ENCODE measurements at regions of chr15 and their contacts with region 1.

Region 1: GRCh38 chr15:79989682-79990081 is 18.7 kb upstream of the BCL2A1 start:
- DNase-seq: no peak
- H3K4me3 ChIP-seq: no peak overlapping the region
- H3K27ac ChIP-seq: no peak overlapping the region
- H3K4me1 ChIP-seq: no peaks in the 10 kb centered on the region
- H3K27me3 ChIP-seq: peaks cover under 1 to 3% of the 10 kb centered on the region in 2 experiments
- CTCF ChIP-seq: no peak
- POLR2A ChIP-seq: no peak

Region 2: GRCh38 chr15:79769069-79769481 is 220.6 kb before region 1 on chr15:
- CTCF ChIA-PET with region 1: no interaction called
- POLR2A ChIA-PET with region 1: no interaction called
- dilution Hi-C with region 1: no loop called
- intact Hi-C with region 1: loop called (anchors 1 kb)
- DNase-seq: no peak
- H3K4me3 ChIP-seq: no peak overlapping the region
- H3K27ac ChIP-seq: no peak overlapping the region
- H3K4me1 ChIP-seq: no peaks in the 10 kb centered on the region
- H3K27me3 ChIP-seq: no peaks in the 10 kb centered on the region
- CTCF ChIP-seq: peak in 1 of 2 donors; percentile 3
- POLR2A ChIP-seq: no peak

Region 3: DNA sequence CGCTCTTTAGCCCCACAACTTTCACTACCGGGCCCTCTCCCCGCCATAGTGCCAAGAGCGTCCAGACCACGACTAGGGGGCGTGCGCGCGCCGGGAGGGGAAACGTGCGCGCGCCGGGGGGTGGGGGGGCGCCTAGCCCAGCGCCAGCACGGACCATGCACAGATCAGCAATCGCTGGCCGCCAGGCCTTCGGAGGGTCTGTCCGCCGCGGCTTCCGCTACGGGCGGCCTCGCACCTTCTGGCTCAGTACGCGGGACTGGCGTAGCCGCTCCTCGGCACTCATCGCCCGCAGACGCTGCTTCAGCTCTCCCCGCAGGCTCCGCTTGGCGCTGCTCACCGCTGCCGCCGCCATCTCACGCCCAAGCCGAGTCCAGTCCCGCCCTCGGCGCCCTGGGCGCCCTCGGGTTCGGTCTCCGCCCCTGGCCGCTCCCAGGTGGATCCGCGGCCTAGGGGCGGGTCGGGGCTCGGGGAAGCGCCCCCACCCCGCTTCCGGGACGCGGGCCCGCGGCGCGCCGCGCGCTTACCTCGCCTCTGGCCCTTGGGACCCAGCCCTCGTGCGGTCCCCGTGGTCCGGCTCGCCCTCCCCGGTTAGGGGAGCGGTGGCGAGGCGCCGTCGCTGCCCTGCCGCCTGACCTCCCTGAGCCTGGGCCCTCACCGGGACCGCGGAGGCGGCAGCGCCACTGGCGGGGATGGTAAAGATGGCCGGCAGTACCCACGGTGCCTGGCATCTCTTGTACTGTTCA is 92.9 kb before region 1 on chr15 and contains the start of gene MTHFS:
- CTCF ChIA-PET with region 1: interaction called, 3 read pairs
- POLR2A ChIA-PET with region 1: no interaction called
- dilution Hi-C with region 1: no loop called
- intact Hi-C with region 1: loop called (anchors 1 kb)
- DNase-seq: peak; percentile 73
- H3K4me3 ChIP-seq: peak within 1 kb of the TSS in 2 of 3 experiments; percentile 53 to 77
- H3K27ac ChIP-seq: peak within 1 kb of the TSS; percentile 46
- H3K4me1 ChIP-seq: peaks cover 8% of the 10 kb centered on the region
- H3K27me3 ChIP-seq: no peaks in the 10 kb centered on the region
- CTCF ChIP-seq: peak; percentile 42 to 65
- POLR2A ChIP-seq: peak; percentile 66
- total RNA-seq, gene MTHFS: 9.9 and 15.7 TPM in 2 replicates

Region 4: GRCh38 chr15:80058851-80059785 is 69.4 kb after region 1 on chr15 and contains the start of gene ZFAND6:
- CTCF ChIA-PET with region 1: no interaction called
- POLR2A ChIA-PET with region 1: no interaction called
- dilution Hi-C with region 1: no loop called
- intact Hi-C with region 1: no loop called
- DNase-seq: peak; percentile 93
- H3K4me3 ChIP-seq: peak within 1 kb of the TSS; percentile 54 to 90 (median 89)
- H3K27ac ChIP-seq: peak within 1 kb of the TSS; percentile 87
- H3K4me1 ChIP-seq: peaks cover 18% of the 10 kb centered on the region
- H3K27me3 ChIP-seq: peaks cover 8 to 16% of the 10 kb centered on the region in 2 experiments
- CTCF ChIP-seq: no peak
- POLR2A ChIP-seq: peak; percentile 59
- total RNA-seq, gene ZFAND6: 50.3 and 53.0 TPM in 2 replicates

Region 5: GRCh38 chr15:80309769-80310384 is 320.2 kb after region 1 on chr15:
- CTCF ChIA-PET with region 1: interaction called, 9 read pairs
- POLR2A ChIA-PET with region 1: no interaction called
- dilution Hi-C with region 1: no loop called
- intact Hi-C with region 1: loop called (anchors 5 kb)
- DNase-seq: peak; percentile 11
- H3K4me3 ChIP-seq: no peak overlapping the region
- H3K27ac ChIP-seq: no peak overlapping the region
- H3K4me1 ChIP-seq: no peaks in the 10 kb centered on the region
- H3K27me3 ChIP-seq: no peaks in the 10 kb centered on the region
- CTCF ChIP-seq: peak; percentile 24 to 33
- POLR2A ChIP-seq: no peak